ENCODE measurements at regions of chr14 and their contacts with region 1.

Region 1: GRCh38 chr14:92106143-92106926 is at the start of gene ATXN3:
- DNase-seq: peak; percentile 97 to 98
- ATAC-seq: peak; percentile 91 to 95
- H3K4me3 ChIP-seq: peak within 1 kb of the TSS; percentile 92 to 98 (median 95)
- H3K27ac ChIP-seq: peak within 1 kb of the TSS; percentile 96 to 97 (median 97)
- H3K4me1 ChIP-seq: peaks cover 10 to 24% of the 10 kb centered on the region in 2 donors
- H3K27me3 ChIP-seq: no peaks in the 10 kb centered on the region
- CTCF ChIP-seq: peak; percentile 51 to 86 (median 70)
- POLR2A ChIP-seq: peak; percentile 48 to 71
- total RNA-seq, gene ATXN3: 6.4 to 18.9 (median 8.5) TPM

Region 2: GRCh38 chr14:91510174-91511042 is 595.9 kb before region 1 on chr14 and contains the start of gene PPP4R3A:
- in situ Hi-C with region 1: loop called in 1 of 4 experiments (anchors 25 kb)
- intact Hi-C with region 1: no loop called
- DNase-seq: peak; percentile 90 to 92
- ATAC-seq: peak; percentile 88 to 92
- H3K4me3 ChIP-seq: peak within 1 kb of the TSS; percentile 86 to 96 (median 90)
- H3K27ac ChIP-seq: peak within 1 kb of the TSS; percentile 92 to 97 (median 96)
- H3K4me1 ChIP-seq: peaks cover 19 to 30% of the 10 kb centered on the region in 2 donors
- H3K27me3 ChIP-seq: peaks cover 0 to 3% (median 0%) of the 10 kb centered on the region in 3 donors
- CTCF ChIP-seq: no peak
- POLR2A ChIP-seq: peak; percentile 85 to 89
- total RNA-seq, gene PPP4R3A: 38.8 to 53.3 (median 44.6) TPM

Region 3: GRCh38 chr14:92121670-92122350 is 15.5 kb after region 1 on chr14 and contains the starts of genes CPSF2 and NDUFB1:
- in situ Hi-C with region 1: no loop called
- intact Hi-C with region 1: loop called (anchors 1 kb)
- DNase-seq: peak; percentile 76 to 80
- ATAC-seq: peak; percentile 91 to 93
- H3K4me3 ChIP-seq: peak within 1 kb of the TSS; percentile 84 to 95 (median 91)
- H3K27ac ChIP-seq: peak within 1 kb of the TSS; percentile 92 to 99 (median 96)
- H3K4me1 ChIP-seq: peaks cover 37 to 41% of the 10 kb centered on the region in 2 donors
- H3K27me3 ChIP-seq: no peaks in the 10 kb centered on the region
- CTCF ChIP-seq: peak in 3 of 5 experiments; percentile 25 to 46 (median 39)
- POLR2A ChIP-seq: peak; percentile 59 to 67
- total RNA-seq, gene CPSF2: 52.2 to 146 (median 58.6) TPM
- total RNA-seq, gene NDUFB1: 409 to 1,081 (median 454) TPM

Region 4: DNA sequence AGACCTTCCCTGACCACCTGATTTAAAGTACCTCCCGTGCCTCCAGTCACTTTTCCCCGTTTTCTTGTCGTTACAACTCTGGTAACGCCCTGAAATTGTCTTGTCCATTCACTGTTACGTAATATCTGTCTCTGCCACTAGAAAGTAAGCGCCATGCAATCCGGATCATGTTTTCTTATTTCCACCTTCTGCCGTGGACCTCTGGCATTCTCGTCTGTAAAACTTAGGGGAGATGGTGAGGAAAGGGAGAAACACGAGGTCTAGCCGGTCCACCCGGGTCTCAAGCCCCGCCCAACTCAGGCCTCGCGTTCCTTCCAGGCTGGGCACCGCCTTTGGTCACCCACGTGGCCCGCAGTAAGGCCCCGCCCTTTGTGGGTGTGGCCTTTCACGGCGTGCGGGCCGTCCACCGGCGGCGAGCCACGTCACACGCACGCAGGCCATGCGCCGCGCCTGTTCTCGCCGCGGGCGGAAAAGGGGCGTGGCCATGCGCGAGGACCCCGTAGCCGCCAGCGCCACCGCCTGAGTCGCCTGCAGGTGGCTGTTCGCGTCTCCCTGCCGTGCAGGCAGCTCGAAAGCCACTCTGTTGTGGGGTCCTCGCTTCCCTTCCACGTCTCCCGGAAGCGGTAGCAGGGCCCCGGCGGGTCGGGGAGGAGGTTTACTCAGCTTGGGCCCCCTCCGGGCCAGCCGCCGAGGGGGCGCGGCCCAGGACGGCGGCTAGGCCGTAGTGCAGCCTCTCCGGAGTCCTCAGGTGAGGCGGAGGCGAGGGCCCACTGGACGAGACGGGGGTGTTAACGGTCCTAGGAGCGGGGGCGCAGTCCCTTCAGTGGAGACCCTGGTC is 687.6 kb after region 1 on chr14 and contains the start of gene GOLGA5:
- in situ Hi-C with region 1: loop called in 1 of 4 experiments (anchors 25 kb)
- intact Hi-C with region 1: no loop called
- DNase-seq: peak; percentile 95 to 97
- ATAC-seq: peak; percentile 94 to 95
- H3K4me3 ChIP-seq: peak within 1 kb of the TSS; percentile 76 to 95 (median 92)
- H3K27ac ChIP-seq: peak within 1 kb of the TSS; percentile 87 to 92 (median 90)
- H3K4me1 ChIP-seq: peaks cover 15 to 26% of the 10 kb centered on the region in 2 donors
- H3K27me3 ChIP-seq: no peaks in the 10 kb centered on the region
- CTCF ChIP-seq: peak in 4 of 5 experiments; percentile 23 to 33 (median 30)
- POLR2A ChIP-seq: peak; percentile 73 to 83
- total RNA-seq, gene GOLGA5: 27.0 to 34.8 (median 33.8) TPM

Measured in gastrocnemius medialis (tissue), 4 donors.